Tibial artery (tissue), 4 donors: ENCODE measurements at regions of chr14 and their contacts with region 1.

Region 1: DNA sequence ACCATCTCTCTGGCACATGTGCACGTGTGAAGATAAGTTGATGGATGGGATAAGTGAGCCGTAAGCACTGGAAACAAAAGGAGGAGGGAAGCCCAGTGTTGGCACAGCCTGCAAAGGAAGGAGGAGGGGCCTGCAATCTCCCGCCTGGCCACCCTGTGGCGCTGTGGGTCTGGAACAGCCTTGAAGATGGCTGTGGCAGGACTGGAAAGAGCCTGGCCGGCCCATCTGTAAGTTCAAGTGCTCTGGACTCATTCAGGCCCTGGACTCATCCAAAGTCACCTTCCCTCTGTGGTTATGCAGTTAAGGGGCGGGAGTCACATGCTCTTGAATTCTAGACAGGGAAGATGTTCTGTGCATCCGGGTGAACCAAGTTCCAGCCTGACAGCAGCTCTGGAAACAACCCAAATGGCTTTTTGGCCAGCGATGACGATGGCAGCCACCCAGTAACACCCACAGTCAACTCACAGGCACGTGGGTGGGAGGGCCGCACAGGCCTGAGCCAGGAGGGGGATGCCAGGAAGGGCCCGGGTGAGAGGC is 50.4 kb downstream of the CHGA start:
- DNase-seq: peak; percentile 68 to 89
- H3K4me3 ChIP-seq: no peak overlapping the region
- H3K27ac ChIP-seq: peak overlapping the region in 1 of 2 donors; percentile 56
- H3K4me1 ChIP-seq: peaks cover 0 to 33% (median 15%) of the 10 kb centered on the region in 4 donors
- H3K27me3 ChIP-seq: no peaks in the 10 kb centered on the region
- CTCF ChIP-seq: peak; percentile 76 to 79

Region 2: DNA sequence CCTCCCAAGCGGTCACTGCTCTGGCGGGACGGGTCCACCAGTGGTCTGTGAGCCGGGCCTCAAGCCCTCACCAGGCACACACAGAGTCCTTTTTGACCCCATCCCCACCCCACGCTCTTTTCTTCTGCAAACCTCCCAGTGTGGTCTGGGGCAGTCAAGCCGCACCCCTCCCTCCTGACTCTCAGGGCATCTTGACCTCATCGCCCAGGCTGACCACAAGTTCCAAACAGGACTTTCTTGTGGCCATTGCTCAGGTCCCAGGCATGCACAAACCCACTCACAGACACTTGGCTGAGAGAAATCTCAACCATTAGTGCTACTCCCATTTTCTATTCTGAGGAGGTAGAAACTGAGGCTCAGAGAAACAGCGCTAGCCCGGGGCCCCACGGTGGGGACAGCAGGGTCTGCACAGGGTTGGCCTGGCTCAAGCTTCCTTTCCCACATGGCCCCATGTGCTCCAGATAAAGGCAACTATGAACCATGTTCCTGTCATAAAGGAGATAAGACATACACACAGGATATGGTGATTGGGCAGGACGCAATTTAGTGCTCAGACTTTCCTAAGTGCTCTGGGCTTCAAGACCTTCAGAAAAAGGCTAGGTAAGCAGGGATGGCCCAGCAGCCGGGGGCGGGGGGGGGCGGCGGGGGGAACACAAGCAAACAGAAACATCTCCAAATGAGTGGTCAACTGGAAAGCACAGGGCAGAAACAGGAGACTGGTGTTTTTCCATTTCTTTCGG is 72.8 kb after region 1 on chr14:
- intact Hi-C with region 1: loop called (anchors 5 kb)
- DNase-seq: no peak
- H3K4me3 ChIP-seq: no peak overlapping the region
- H3K27ac ChIP-seq: peak overlapping the region in 1 of 2 donors; percentile 23
- H3K4me1 ChIP-seq: peaks cover 0 to 89% (median 51%) of the 10 kb centered on the region in 4 donors
- H3K27me3 ChIP-seq: no peaks in the 10 kb centered on the region
- CTCF ChIP-seq: no peak

Region 3: GRCh38 chr14:93142854-93143652 is 169.7 kb after region 1 on chr14:
- intact Hi-C with region 1: loop called (anchors 5 kb)
- DNase-seq: no peak
- H3K4me3 ChIP-seq: no peak overlapping the region
- H3K27ac ChIP-seq: no peak overlapping the region
- H3K4me1 ChIP-seq: peaks cover 0 to 3% (median 0%) of the 10 kb centered on the region in 4 donors
- H3K27me3 ChIP-seq: no peaks in the 10 kb centered on the region
- CTCF ChIP-seq: no peak